B cell (primary cell): ENCODE measurements at regions of chr1 and their contacts with region 1.

Region 1: DNA sequence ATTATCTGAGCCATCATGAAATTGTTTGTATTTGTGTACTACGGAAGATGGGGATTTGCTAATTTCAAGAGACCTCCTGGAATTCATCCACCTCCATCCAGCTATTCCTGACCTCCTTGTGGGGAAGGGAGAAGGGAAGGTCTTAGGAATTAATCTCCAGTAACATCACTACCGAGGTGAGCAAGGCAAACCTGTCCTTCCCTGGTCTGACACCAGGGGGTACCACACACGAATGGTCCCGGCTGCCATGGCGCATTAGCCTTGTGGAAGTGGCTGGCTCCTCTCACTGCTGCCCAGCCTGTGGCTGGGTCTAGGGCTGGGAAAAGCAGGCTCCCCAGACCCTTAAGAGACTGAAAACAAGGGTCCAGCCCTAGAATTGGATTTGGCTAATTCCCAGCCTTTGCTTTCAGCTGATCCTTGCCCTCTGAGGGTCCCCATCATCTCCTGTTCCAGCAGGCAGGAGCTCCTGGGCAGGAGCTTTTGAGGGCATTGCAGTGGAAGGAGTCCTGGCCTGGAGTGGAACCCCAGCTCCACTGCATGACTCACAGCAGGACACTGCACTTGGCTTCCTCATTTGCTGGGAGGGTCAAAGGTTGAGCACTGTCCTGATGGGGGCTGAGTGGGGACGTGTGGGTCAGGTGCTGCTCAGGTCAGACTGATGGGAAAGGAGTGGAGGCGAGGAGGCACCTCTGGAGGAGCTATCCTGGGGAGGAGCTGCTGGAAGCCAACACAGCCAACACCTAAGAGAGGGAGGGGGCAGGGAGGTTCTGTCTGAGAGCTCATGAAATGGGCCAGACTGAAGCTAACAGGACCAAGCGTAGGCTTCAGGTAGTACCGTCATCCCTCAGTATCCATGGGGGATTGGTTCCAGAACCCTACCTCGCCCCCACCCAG is 34.7 kb downstream of the RIMS3 start:
- DNase-seq: peak; percentile 49
- ATAC-seq: peak; percentile 43
- H3K4me3 ChIP-seq: no peak overlapping the region
- H3K4me3 Mint-ChIP-seq: no peak overlapping the region
- H3K27ac ChIP-seq: no peak overlapping the region
- H3K27ac Mint-ChIP-seq: no peak overlapping the region
- H3K4me1 ChIP-seq: peaks cover 12 to 18% of the 10 kb centered on the region in 2 donors
- H3K4me1 Mint-ChIP-seq: peaks cover 18% of the 10 kb centered on the region
- H3K27me3 ChIP-seq: peaks cover 0 to 5% (median 0%) of the 10 kb centered on the region in 4 experiments
- H3K27me3 Mint-ChIP-seq: peaks cover 2% of the 10 kb centered on the region
- CTCF ChIP-seq: peak; percentile 64

Region 2: GRCh38 chr1:40722636-40723035 is 91.9 kb after region 1 on chr1:
- CTCF ChIA-PET with region 1: interaction called, 22 read pairs
- POLR2A ChIA-PET with region 1: no interaction called
- intact Hi-C with region 1: no loop called
- DNase-seq: peak; percentile 38
- ATAC-seq: no peak
- H3K4me3 ChIP-seq: no peak overlapping the region
- H3K4me3 Mint-ChIP-seq: no peak overlapping the region
- H3K27ac ChIP-seq: peak overlapping the region in 1 of 2 donors; percentile 35
- H3K27ac Mint-ChIP-seq: peak overlapping the region; percentile 37
- H3K4me1 ChIP-seq: peaks cover 8 to 15% of the 10 kb centered on the region in 2 donors
- H3K4me1 Mint-ChIP-seq: peaks cover 62% of the 10 kb centered on the region
- H3K27me3 ChIP-seq: no peaks in the 10 kb centered on the region
- H3K27me3 Mint-ChIP-seq: no peaks in the 10 kb centered on the region
- CTCF ChIP-seq: peak; percentile 29